SK-N-SH (cell line): ENCODE measurements at regions of chr1 and their contacts with region 1.

Region 1: GRCh38 chr1:921011-921837 is 2.5 kb upstream of the SAMD11 start:
- DNase-seq: peak; percentile 92
- H3K4me3 ChIP-seq: peak overlapping the region; percentile 9 to 24; a peak in 2 of 4 replicates
- H3K27ac ChIP-seq: peak overlapping the region in 1 of 2 experiments; percentile 55; a peak in 2 of 4 replicates
- H3K4me1 ChIP-seq: peaks cover 8 to 68% of the 10 kb centered on the region in 2 experiments; a peak in 2 of 4 replicates
- H3K27me3 ChIP-seq: no peaks in the 10 kb centered on the region
- CTCF ChIP-seq: peak; percentile 38
- EP300 ChIP-seq: peak; percentile 46 to 64; a peak in 3 of 4 replicates
- RAD21 ChIP-seq: peak; percentile 2; the same call in 1 of the 2 replicates

Region 2: DNA sequence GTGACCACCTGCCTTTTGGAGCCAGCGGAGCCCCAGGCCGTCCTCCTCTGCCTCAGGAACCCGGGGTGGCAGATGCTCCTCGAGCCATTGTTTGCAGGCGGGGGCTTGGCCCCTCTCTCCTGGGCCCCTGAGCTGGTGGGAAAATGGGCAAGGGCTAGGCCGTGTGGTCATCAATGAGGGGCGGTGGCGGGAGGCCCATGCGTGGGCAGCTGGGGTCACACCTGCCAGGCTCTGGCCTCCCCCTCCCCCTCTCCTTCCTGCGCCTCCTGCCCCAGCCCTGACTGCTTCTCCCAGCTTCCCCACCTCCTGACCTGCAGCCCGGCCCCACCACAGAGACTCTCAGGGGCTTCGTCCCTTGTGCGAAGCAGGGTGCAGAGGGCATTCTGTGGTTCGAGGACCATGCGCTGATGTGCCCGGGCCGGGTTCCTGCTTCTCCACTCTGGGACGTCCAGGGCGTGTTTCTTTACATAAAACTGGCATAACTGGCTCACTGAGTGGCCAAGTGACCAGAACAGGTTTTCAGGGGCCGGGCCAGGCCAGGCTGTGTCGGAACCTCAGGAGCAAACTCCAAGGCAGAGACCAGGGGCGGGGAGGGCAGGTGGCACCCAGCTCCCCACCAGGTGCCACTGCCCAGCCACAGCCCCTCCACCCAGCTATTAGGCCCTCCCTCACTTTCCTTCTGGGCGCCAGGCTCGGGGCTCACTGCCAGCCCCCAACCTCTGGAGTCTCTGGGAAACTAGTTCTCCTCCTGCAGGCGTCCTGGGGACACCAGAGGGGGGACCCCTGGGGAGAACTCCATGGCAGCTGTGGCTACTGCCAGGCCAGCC is 11.8 kb after region 1 on chr1:
- CTCF ChIA-PET with region 1: interaction called, 61 read pairs
- POLR2A ChIA-PET with region 1: no interaction called
- DNase-seq: no peak
- H3K4me3 ChIP-seq: no peak overlapping the region
- H3K27ac ChIP-seq: no peak overlapping the region
- H3K4me1 ChIP-seq: peaks cover 0 to 12% of the 10 kb centered on the region in 2 experiments; a peak in 1 of 4 replicates
- H3K27me3 ChIP-seq: no peaks in the 10 kb centered on the region
- CTCF ChIP-seq: no peak
- EP300 ChIP-seq: no peak
- RAD21 ChIP-seq: no peak

Region 3: DNA sequence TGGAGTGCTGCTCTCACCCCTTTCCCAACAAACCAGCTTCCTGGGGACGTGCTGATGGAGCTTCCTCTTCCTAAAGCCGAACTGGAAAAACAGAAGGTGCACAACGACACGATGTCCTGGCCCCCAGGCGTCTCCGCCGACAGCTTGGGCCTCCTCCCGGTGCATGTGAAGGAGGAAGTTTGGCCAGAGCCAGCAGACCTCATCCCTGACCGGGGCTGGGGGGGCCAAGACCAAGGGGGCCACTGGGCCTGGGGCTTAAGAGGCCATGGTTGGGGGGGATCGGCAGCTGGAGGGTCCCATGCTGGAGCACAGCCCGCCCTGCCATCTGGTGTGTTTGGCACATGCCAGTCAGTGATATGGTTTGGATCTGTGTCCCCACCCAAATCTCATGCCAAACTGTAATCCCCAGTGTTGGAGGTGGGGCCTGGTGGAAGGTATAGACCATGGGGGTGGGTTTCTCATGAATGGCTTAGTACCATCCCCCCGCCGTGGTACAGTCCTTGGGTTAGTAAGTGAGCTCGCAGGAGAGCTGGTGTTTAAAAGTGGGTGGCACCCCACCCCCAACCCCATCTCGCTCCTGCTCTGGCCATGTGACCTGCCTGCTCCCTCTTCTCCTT is 72.3 kb after region 1 on chr1:
- CTCF ChIA-PET with region 1: no interaction called
- POLR2A ChIA-PET with region 1: no interaction called
- DNase-seq: peak; percentile 15
- H3K4me3 ChIP-seq: no peak overlapping the region
- H3K27ac ChIP-seq: no peak overlapping the region
- H3K4me1 ChIP-seq: peaks cover 0 to 3% of the 10 kb centered on the region in 2 experiments; a peak in 1 of 4 replicates
- H3K27me3 ChIP-seq: peaks cover 4% of the 10 kb centered on the region; the same call in 1 of the 2 replicates
- CTCF ChIP-seq: no peak
- EP300 ChIP-seq: no peak
- RAD21 ChIP-seq: no peak